Activated T-helper 1 cell treated with anti-CD3 and anti-CD28 coated beads, Interleukin-12 subunit alpha, Interleukin-12 subunit beta, Interleukin-2, Interleukin-4 antibody, amounts not matched to agents 30 ng/mL and 10 ng/mL and 1 ng/mL, durations not matched to agents 14 hours and 24 hours and 36 hours (primary cell): ENCODE measurements at regions of chr9 and their contacts with region 1.

Region 1: DNA sequence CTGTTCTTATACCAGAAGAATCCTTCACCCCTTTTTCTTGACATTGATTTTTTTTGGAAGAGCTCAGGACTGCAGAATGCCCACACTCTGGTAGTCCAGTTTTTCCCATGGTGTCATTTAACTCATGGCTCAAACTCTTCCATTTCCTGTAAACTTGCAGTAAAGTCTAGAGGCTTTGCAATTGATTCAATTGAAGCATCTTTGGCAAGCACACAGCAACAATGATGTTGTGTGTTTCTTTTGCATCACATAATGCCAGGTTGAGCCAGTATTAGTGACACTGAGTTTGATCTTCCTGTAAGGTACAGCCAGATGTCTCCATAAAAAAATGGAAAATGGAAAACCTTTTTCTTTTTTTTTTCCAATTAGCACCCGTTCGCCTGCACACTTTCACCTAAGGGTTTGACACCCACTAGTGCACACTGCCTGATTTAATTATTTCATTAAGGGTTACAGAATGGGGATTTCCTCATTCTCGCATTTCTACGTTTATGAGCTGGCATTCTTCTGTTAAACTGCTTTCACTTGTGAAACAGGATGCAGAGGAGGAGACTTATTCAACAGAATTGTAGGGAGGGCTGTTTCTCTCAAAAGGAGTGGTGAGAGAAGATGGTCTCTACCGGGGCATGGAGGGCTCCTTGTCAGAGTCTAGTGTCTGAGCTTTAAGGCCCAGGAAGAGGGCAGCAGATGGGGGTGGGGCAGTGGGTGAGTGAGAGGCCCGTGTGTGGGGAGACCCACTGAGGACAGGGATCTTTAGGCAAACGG is 2.3 kb upstream of the S1PR3 start:
- DNase-seq: peak; percentile 12
- H3K4me3 Mint-ChIP-seq: peak overlapping the region; percentile 77
- H3K27ac Mint-ChIP-seq: peak overlapping the region; percentile 82
- H3K4me1 Mint-ChIP-seq: peaks cover 25% of the 10 kb centered on the region
- H3K27me3 Mint-ChIP-seq: peaks cover 32% of the 10 kb centered on the region

Region 2: DNA sequence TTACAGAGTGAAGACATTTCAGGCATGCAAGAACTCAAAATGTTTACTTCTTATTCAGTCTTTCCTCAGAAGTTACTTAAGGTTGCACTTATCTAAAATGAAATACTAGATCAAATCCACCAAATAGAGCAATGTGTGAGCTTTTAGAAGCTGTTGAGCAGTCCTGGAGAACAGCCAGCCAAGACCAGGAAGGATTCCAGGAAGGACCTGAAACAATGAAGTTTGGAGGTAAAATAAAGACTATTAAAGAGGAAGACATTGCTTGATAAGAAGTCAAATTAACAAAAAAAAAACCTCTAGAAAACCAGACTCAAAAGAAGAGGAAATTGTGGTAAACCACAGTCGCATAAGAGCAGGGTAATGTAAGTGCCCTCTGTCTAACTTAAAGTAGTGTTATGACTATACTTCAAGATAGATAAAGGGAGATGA is 153.9 kb before region 1 on chr9:
- intact Hi-C with region 1: loop called (anchors 2 kb)
- DNase-seq: no peak
- H3K4me3 Mint-ChIP-seq: no peak overlapping the region
- H3K27ac Mint-ChIP-seq: peak overlapping the region; percentile 20
- H3K4me1 Mint-ChIP-seq: peaks cover 7% of the 10 kb centered on the region
- H3K27me3 Mint-ChIP-seq: peaks cover 47% of the 10 kb centered on the region

Region 3: DNA sequence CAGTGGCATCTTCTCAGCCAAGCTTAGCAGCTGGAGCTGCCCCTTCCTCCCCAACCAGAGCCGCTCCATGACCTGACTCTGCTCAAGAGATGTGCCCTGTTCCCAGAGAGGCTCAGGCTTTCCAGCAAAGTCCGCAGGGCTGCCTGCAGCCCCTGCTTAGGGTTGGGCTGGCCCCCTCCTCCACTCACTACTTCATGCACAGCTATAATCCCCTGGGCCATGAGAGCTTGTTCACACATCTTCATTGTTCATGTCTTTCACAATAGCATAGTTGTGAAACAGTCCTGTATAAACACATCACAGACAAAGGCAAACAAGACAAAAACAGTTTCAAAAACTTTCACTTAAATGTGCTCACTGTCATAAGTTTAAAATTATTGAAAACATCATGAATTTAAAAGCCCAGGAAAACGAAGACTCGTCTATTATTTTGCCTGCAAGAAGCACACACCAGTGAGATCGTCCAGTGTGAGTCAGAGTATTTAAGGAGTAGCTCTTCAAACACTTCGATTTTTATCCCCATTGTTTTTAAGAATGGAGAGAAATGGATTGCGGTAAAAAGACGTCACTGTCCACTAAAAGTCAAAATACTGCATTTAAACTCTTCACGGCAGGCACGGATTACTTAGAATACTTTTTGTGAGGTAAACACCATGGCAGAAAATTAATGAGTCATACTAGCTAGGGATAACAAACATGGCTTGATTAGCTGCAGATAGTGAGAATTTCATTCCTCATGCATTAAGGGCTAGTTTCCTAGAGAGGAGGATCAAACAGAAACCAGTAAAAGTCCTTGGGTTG is 38.4 kb before region 1 on chr9:
- intact Hi-C with region 1: loop called (anchors 2 kb)
- DNase-seq: no peak
- H3K4me3 Mint-ChIP-seq: no peak overlapping the region
- H3K27ac Mint-ChIP-seq: no peak overlapping the region
- H3K4me1 Mint-ChIP-seq: peaks cover 14% of the 10 kb centered on the region
- H3K27me3 Mint-ChIP-seq: peaks cover 4% of the 10 kb centered on the region

Region 4: GRCh38 chr9:88975966-88976889 is 12.8 kb before region 1 on chr9:
- intact Hi-C with region 1: loop called (anchors 1 kb)
- DNase-seq: no peak
- H3K4me3 Mint-ChIP-seq: no peak overlapping the region
- H3K27ac Mint-ChIP-seq: peak overlapping the region; percentile 41
- H3K4me1 Mint-ChIP-seq: peaks cover 5% of the 10 kb centered on the region
- H3K27me3 Mint-ChIP-seq: peaks cover 4% of the 10 kb centered on the region